Activated naive CD4-positive, alpha-beta T cell treated with anti-CD3 and anti-CD28 coated beads, Interleukin-2, amount 10 ng/mL, durations not matched to agents 7 days and 5 days (primary cell): ENCODE measurements at regions of chr2 and their contacts with region 1.

Region 1: DNA sequence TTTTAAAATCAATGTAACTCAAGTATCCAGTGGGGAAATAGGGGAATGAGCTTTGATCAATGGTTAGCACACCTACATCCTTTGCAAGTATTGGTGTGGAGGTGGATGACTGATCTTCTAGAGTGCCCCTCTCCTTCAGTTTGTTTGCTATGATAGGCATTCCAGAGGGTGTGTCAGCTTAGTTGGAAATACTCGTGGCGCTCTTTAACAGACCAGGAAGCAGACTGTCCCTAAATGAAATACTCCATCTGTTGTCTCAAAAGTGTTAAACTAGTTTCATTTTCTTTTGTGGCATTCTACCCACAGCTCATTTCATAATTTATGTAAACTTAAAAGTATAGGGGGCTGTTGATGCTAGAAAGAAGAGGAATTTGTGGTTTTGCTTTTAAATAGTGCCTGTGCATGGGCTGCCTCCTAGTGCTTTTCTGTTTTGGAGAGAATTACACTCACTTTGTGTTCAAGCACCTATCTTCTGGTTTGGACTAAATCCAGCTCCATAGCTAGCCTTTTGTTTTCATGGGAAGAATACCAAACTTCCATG is 66.2 kb downstream of the STAT1 start:
- DNase-seq: no peak
- H3K4me3 Mint-ChIP-seq: no peak overlapping the region
- H3K27ac Mint-ChIP-seq: peak overlapping the region; percentile 68
- H3K4me1 Mint-ChIP-seq: peaks cover 14% of the 10 kb centered on the region
- H3K27me3 Mint-ChIP-seq: no peaks in the 10 kb centered on the region

Region 2: DNA sequence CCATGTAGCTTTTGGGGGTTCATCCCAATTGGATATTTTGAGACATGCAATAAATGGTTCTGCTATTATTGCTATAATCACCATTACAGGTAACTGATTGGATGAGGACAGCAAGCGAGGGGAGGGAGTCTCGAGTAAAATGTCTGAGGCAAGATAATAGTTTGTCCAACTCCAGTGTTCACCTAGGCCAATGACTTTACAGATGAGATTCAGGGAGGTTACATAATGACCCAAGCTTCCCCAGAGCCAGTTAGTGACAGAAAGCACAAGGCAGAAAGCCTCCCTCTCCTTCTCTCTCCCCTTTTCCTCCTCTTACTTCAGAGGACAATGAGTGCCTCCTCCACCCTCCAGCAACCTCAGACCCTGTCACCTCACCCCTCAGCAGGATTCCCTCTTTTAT is 165.5 kb before region 1 on chr2:
- CTCF ChIA-PET with region 1: interaction called, 17 read pairs
- DNase-seq: no peak
- H3K4me3 Mint-ChIP-seq: no peak overlapping the region
- H3K27ac Mint-ChIP-seq: no peak overlapping the region
- H3K4me1 Mint-ChIP-seq: peaks cover 3% of the 10 kb centered on the region
- H3K27me3 Mint-ChIP-seq: peaks cover 9% of the 10 kb centered on the region

Region 3: GRCh38 chr2:190927301-190927700 is 20.5 kb before region 1 on chr2:
- CTCF ChIA-PET with region 1: no interaction called
- DNase-seq: no peak
- H3K4me3 Mint-ChIP-seq: no peak overlapping the region
- H3K27ac Mint-ChIP-seq: no peak overlapping the region
- H3K4me1 Mint-ChIP-seq: no peaks in the 10 kb centered on the region
- H3K27me3 Mint-ChIP-seq: no peaks in the 10 kb centered on the region

Region 4: GRCh38 chr2:190961918-190962487 is 14.2 kb after region 1 on chr2:
- CTCF ChIA-PET with region 1: no interaction called
- DNase-seq: no peak
- H3K4me3 Mint-ChIP-seq: no peak overlapping the region
- H3K27ac Mint-ChIP-seq: peak overlapping the region; percentile 9
- H3K4me1 Mint-ChIP-seq: peaks cover 27% of the 10 kb centered on the region
- H3K27me3 Mint-ChIP-seq: no peaks in the 10 kb centered on the region

Region 5: DNA sequence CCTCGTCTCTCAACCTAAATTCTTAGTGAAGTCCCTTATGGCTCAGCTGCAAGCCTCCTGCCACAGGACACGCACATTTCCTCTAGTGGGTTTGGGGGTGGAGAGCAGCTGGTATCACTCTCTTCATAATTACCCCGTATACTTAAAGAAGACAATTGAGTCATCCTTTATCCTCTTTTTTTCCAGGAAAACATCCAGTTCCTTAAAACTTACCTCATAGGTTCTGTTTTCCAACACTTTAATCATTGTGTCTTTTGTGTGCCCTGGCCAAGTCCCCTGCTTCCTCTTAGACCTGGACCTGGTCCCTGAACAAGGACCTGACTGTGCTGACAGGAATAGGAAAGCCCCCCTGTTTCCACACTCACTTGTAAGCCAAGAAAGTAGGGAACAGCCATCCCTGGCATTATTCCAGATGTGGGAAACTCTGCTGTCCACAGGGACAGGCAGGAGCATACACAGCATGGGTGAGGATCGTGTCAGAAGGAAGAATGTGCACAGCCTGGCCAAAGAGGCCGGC is 255.2 kb after region 1 on chr2:
- CTCF ChIA-PET with region 1: no interaction called
- DNase-seq: no peak
- H3K4me3 Mint-ChIP-seq: no peak overlapping the region
- H3K27ac Mint-ChIP-seq: no peak overlapping the region
- H3K4me1 Mint-ChIP-seq: peaks cover 46% of the 10 kb centered on the region
- H3K27me3 Mint-ChIP-seq: no peaks in the 10 kb centered on the region